Gastrocnemius medialis (tissue), 4 donors: ENCODE measurements at regions of chr11 and their contacts with region 1.

Region 1: DNA sequence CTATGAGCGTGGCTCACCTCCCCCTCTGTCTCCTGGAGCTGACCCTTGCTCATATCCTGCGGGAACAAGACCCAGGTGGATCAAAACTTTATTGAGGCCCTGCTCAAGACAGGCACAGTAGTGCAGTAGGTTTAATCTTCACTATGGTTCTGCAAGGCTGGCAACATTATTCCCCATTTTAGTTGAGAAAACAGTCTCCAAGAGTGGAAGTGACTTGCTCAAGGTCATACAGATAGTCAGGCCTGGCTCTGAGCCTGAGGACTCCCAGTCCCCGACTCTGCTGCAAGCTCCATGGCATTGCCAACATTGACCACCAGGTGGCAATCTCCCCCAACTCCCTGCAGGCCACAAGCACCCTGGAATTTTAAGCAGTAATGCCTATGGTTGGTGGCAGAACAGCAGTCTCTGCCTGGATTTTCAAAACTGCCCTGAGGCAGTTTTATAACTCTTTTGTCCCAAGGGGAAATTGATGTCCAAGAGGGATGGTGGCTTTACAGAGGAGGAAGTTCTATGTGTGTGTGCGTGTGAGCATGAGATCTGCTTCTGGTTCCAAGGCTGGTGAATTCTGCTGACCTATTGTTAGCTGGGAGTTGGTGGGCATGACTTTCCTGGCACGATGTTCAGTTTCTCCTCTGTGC is 34.1 kb downstream of the NEU3 start:
- DNase-seq: peak; percentile 49 to 82
- ATAC-seq: peak; percentile 79 to 92
- H3K4me3 ChIP-seq: no peak overlapping the region
- H3K27ac ChIP-seq: peak overlapping the region; percentile 3 to 60 (median 8)
- H3K4me1 ChIP-seq: peaks cover 30 to 42% of the 10 kb centered on the region in 2 donors
- H3K27me3 ChIP-seq: no peaks in the 10 kb centered on the region
- CTCF ChIP-seq: peak; percentile 86 to 96 (median 89)
- POLR2A ChIP-seq: no peak

Region 2: GRCh38 chr11:74937696-74938475 is 85.0 kb before region 1 on chr11:
- in situ Hi-C with region 1: loop called in 2 of 4 experiments (anchors 5 kb)
- intact Hi-C with region 1: no loop called
- DNase-seq: no peak
- ATAC-seq: no peak
- H3K4me3 ChIP-seq: no peak overlapping the region
- H3K27ac ChIP-seq: no peak overlapping the region
- H3K4me1 ChIP-seq: peaks cover 0 to 10% of the 10 kb centered on the region in 2 donors
- H3K27me3 ChIP-seq: no peaks in the 10 kb centered on the region
- CTCF ChIP-seq: no peak
- POLR2A ChIP-seq: no peak

Region 3: DNA sequence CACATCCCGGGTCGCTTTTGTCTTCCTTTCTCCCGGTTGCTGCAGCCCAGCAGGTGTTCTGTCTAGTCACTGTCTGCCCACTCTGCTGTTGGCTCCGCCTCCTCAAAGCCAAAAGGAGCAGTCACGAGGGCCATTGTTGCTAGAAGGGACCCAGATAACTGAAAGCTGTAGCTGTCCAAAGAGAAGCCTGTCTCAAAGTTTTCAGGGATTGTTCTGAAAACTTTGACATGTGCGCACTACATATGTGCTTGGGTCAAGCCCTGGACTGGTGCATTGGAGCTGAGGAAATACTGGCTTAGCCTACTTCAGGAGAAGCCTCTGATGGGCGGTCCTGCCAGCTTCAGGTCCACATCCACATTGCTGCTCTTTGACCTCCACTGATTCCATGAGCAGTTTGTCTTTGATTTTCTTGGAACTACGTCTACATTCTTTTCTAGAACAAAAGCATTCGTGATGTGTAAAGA is 82.6 kb after region 1 on chr11:
- in situ Hi-C with region 1: no loop called
- intact Hi-C with region 1: no loop called
- DNase-seq: no peak
- ATAC-seq: no peak
- H3K4me3 ChIP-seq: no peak overlapping the region
- H3K27ac ChIP-seq: no peak overlapping the region
- H3K4me1 ChIP-seq: no peaks in the 10 kb centered on the region
- H3K27me3 ChIP-seq: peaks cover 0 to 3% (median 0%) of the 10 kb centered on the region in 3 donors
- CTCF ChIP-seq: no peak
- POLR2A ChIP-seq: no peak

Region 4: DNA sequence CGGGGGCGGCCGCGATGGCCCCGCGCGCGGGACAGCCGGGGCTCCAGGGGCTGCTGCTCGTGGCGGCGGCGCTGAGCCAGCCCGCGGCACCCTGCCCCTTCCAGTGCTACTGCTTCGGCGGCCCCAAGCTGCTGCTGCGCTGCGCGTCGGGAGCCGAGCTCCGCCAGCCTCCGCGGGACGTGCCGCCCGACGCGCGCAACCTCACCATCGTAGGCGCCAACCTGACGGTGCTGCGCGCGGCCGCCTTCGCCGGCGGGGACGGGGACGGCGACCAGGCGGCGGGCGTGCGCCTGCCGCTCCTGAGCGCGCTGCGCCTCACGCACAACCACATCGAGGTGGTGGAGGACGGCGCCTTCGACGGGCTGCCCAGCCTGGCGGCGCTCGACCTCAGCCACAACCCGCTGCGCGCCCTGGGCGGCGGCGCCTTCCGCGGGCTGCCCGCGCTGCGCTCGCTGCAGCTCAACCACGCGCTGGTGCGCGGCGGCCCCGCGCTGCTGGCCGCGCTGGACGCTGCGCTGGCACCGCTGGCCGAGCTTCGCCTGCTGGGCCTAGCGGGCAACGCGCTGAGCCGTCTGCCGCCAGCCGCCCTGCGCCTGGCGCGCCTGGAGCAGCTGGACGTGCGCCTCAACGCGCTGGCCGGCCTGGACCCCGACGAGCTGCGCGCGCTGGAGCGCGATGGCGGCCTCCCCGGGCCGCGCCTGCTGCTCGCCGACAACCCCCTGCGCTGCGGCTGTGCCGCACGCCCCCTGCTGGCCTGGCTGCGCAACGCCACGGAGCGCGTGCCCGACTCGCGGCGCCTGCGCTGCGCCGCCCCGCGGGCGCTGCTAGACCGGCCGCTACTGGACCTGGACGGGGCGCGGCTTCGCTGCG is 218.4 kb after region 1 on chr11:
- in situ Hi-C with region 1: loop called in 2 of 4 experiments (anchors 10 kb)
- intact Hi-C with region 1: loop called (anchors 5 kb)
- DNase-seq: peak; percentile 23 to 61
- ATAC-seq: peak; percentile 94 to 95
- H3K4me3 ChIP-seq: peak overlapping the region in 3 of 4 donors; percentile 35 to 46 (median 43)
- H3K27ac ChIP-seq: no peak overlapping the region
- H3K4me1 ChIP-seq: peaks cover 0 to 6% of the 10 kb centered on the region in 2 donors
- H3K27me3 ChIP-seq: peaks cover 27 to 28% (median 27%) of the 10 kb centered on the region in 3 donors
- CTCF ChIP-seq: peak in 4 of 5 experiments; percentile 89 to 99 (median 94)
- POLR2A ChIP-seq: no peak